PC-9 (cell line): ENCODE measurements at regions of chr17 and their contacts with region 1.

Region 1: GRCh38 chr17:20174588-20175265 is 165.6 kb downstream of the SPECC1 start:
- DNase-seq: peak; percentile 83 to 84
- H3K4me3 ChIP-seq: peak overlapping the region; percentile 34; the same call in 1 of the 2 replicates
- H3K27ac ChIP-seq: peak overlapping the region; percentile 74
- H3K4me1 ChIP-seq: peaks cover 69% of the 10 kb centered on the region
- H3K27me3 ChIP-seq: no peaks in the 10 kb centered on the region
- CTCF ChIP-seq: no peak

Region 2: DNA sequence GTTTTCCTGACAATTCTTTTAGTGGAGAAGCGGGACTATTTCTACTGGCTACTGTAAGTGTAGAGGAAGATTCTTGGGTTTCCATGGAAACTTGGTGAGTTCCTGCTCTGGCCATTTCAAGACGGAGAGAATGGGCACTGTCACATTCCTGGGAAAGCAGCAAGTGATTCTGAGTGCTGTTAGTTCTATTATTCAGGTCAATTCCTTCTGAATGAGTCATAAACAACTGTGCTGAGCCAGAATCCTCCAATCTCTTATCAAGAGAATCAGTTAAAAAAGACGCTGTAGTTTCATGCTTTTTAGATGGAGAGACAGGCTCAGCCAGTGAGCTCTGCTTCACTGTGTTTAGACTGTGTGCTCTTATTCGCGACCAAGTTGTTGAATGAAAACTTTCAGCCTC is 216.7 kb before region 1 on chr17:
- CTCF ChIA-PET with region 1: no interaction called
- POLR2A ChIA-PET with region 1: no interaction called
- intact Hi-C with region 1: no loop called
- DNase-seq: peak; percentile 52 to 92
- H3K4me3 ChIP-seq: no peak overlapping the region
- H3K27ac ChIP-seq: peak overlapping the region; percentile 40
- H3K4me1 ChIP-seq: peaks cover 24% of the 10 kb centered on the region
- H3K27me3 ChIP-seq: no peaks in the 10 kb centered on the region
- CTCF ChIP-seq: no peak

Region 3: GRCh38 chr17:20128036-20128667 is 46.6 kb before region 1 on chr17:
- CTCF ChIA-PET with region 1: no interaction called
- POLR2A ChIA-PET with region 1: no interaction called
- intact Hi-C with region 1: loop called (anchors 1 kb)
- DNase-seq: no peak
- H3K4me3 ChIP-seq: no peak overlapping the region
- H3K27ac ChIP-seq: no peak overlapping the region
- H3K4me1 ChIP-seq: no peaks in the 10 kb centered on the region
- H3K27me3 ChIP-seq: no peaks in the 10 kb centered on the region
- CTCF ChIP-seq: no peak

Region 4: GRCh38 chr17:20141198-20141972 is 33.3 kb before region 1 on chr17:
- CTCF ChIA-PET with region 1: no interaction called
- POLR2A ChIA-PET with region 1: no interaction called
- intact Hi-C with region 1: no loop called
- DNase-seq: no peak
- H3K4me3 ChIP-seq: no peak overlapping the region
- H3K27ac ChIP-seq: no peak overlapping the region
- H3K4me1 ChIP-seq: no peaks in the 10 kb centered on the region
- H3K27me3 ChIP-seq: no peaks in the 10 kb centered on the region
- CTCF ChIP-seq: no peak

Region 5: GRCh38 chr17:20155258-20156195 is 19.2 kb before region 1 on chr17:
- CTCF ChIA-PET with region 1: no interaction called
- POLR2A ChIA-PET with region 1: interaction called, 3 read pairs
- intact Hi-C with region 1: loop called (anchors 1 kb)
- DNase-seq: peak; percentile 95 to 100
- H3K4me3 ChIP-seq: peak overlapping the region; percentile 92
- H3K27ac ChIP-seq: peak overlapping the region; percentile 88
- H3K4me1 ChIP-seq: peaks cover 31% of the 10 kb centered on the region
- H3K27me3 ChIP-seq: no peaks in the 10 kb centered on the region
- CTCF ChIP-seq: no peak

Region 6: DNA sequence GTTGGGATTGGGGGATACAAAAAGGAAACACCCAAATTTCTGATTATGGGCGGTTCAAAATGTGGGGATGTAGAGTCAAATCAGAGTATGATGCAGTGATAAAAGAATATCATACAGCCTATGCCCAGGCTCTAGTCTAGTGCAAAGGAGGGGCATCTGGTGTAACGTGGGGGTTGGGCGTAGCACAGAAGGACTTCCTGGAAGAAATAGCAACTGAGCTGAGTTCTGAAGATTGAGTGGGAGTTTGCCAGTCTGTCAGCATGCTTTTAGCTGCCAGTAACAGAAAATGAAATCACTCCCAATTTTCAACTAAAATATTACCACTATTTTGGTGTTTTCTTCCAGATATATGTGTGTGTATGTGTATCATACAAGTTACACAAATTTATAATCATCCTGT is 31.3 kb after region 1 on chr17:
- CTCF ChIA-PET with region 1: no interaction called
- POLR2A ChIA-PET with region 1: interaction called, 6 read pairs
- intact Hi-C with region 1: loop called (anchors 5 kb)
- DNase-seq: peak in 1 of 2 experiments; percentile 14
- H3K4me3 ChIP-seq: no peak overlapping the region
- H3K27ac ChIP-seq: 0 out of 2 replicates have a peak overlapping the region, but pooled peaks have one; percentile 2
- H3K4me1 ChIP-seq: peaks cover 54% of the 10 kb centered on the region
- H3K27me3 ChIP-seq: no peaks in the 10 kb centered on the region
- CTCF ChIP-seq: no peak

Region 7: GRCh38 chr17:20226814-20227482 is 52.2 kb after region 1 on chr17:
- CTCF ChIA-PET with region 1: no interaction called
- POLR2A ChIA-PET with region 1: interaction called, 4 read pairs
- intact Hi-C with region 1: loop called (anchors 2 kb)
- DNase-seq: peak; percentile 42 to 76
- H3K4me3 ChIP-seq: no peak overlapping the region
- H3K27ac ChIP-seq: 0 out of 2 replicates have a peak overlapping the region, but pooled peaks have one; percentile 13
- H3K4me1 ChIP-seq: peaks cover 21% of the 10 kb centered on the region
- H3K27me3 ChIP-seq: no peaks in the 10 kb centered on the region
- CTCF ChIP-seq: peak; percentile 91